ENCODE measurements at regions of chr3 and their contacts with region 1.

Region 1: DNA sequence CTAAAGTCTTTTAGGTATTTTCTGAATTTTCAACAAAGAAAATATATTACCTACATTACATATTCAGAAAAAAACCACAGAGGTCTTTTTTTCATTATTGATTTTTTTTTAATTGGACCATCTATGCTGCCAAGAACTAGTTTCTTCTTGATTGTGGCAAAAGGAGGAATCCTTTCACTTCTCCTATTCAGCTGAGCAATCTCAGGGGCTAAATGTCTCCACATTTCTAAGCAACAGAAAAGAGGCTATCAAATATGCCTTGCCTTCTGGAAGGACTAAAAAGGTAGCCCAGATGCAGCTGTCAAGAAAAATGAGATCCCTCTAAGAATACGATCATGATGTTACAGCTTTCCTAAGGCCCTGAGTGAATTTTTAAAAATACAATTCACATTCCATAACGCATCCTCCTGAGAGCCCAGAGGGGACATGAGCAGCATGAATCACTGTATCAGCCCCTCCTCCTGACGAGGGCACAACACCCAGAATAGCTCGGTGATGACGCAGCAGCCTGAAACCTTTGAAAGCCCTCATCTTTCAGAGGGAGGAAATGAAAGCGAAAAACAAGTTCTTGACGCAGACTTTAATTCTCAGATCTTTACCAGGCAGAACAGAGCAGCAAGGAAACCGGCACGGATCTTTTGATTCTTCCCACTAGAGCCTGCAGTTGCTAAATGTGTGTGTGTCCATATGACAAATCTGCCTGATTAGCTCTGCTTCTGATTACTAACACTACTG is 24.6 kb downstream of the RUBCN start:
- DNase-seq: peak; percentile 93 to 100
- H3K4me3 ChIP-seq: peak overlapping the region; percentile 41; the same call in 1 of the 2 replicates
- H3K27ac ChIP-seq: peak overlapping the region; percentile 98
- H3K4me1 ChIP-seq: peaks cover 38% of the 10 kb centered on the region
- H3K27me3 ChIP-seq: no peaks in the 10 kb centered on the region
- CTCF ChIP-seq: no peak

Region 2: DNA sequence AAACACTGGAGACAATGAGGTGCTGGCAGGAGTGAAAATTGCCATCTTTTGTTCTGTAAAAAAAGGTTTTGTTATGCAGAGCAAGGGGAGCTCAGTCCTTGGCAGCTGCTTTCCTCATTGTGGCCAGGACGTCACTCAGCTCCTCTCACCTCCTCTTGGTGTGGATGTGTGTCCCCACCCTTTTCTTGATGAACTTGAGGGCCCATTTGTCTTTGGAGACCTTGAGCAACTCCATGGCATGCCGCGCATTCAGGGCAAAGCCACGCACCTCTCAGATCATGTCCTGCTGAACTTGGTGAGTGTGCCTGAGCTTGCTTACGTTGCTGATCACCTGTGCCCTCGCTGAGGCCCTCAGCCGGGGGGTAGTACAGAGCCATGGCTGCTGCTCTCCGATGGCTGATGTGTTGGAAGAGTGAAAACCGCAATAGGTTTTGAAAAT is 131.9 kb before region 1 on chr3:
- CTCF ChIA-PET with region 1: no interaction called
- POLR2A ChIA-PET with region 1: no interaction called
- intact Hi-C with region 1: no loop called
- DNase-seq: no peak
- H3K4me3 ChIP-seq: no peak overlapping the region
- H3K27ac ChIP-seq: no peak overlapping the region
- H3K4me1 ChIP-seq: no peaks in the 10 kb centered on the region
- H3K27me3 ChIP-seq: no peaks in the 10 kb centered on the region
- CTCF ChIP-seq: no peak

Region 3: GRCh38 chr3:197736491-197737318 is 24.6 kb after region 1 on chr3 and contains the start of gene RUBCN:
- CTCF ChIA-PET with region 1: interaction called, 8 read pairs
- POLR2A ChIA-PET with region 1: interaction called, 9 read pairs
- intact Hi-C with region 1: loop called (anchors 1 kb)
- DNase-seq: peak; percentile 95 to 99
- H3K4me3 ChIP-seq: peak within 1 kb of the TSS; percentile 73
- H3K27ac ChIP-seq: peak within 1 kb of the TSS; percentile 79
- H3K4me1 ChIP-seq: peaks cover 22% of the 10 kb centered on the region
- H3K27me3 ChIP-seq: no peaks in the 10 kb centered on the region
- CTCF ChIP-seq: no peak
- total RNA-seq, gene RUBCN: 34.2 and 41.1 TPM in 2 replicates

Region 4: DNA sequence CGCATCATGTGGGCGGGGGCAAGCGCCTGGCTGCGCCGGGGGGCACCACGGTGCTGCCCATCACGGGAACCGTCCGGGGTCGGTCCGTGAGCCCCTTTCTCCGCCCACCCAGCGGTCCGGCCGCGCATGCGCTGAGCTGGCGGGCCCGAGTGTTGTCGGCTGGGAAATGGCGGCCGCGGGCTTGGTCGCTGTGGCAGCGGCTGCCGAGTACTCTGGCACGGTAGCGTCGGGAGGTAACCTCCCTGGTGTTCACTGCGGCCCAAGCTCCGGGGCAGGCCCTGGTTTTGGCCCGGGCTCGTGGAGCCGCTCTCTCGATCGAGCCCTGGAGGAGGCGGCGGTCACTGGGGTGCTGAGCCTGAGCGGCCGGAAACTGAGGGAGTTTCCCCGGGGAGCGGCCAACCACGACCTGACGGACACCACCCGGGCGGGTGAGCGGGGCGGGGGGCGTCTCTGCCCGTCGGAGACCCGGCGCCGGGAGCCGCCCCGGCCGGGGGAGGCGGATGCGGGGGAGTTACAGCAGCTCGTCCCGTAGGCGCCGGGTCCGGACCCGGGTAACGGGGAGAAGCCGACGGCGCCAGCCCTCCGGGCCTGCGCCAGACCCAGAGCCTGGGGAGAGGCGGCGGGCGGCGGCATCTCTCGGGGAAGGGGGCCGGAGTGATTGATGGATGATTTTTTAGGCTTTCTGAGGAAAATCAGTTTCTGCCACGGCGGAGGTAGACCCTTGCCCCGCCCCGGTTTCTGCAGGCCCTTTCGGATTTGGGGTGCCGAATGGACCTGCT is 79.2 kb after region 1 on chr3 and contains the start of gene LRCH3:
- CTCF ChIA-PET with region 1: no interaction called
- POLR2A ChIA-PET with region 1: no interaction called
- intact Hi-C with region 1: loop called (anchors 1 kb)
- DNase-seq: peak; percentile 49 to 84
- H3K4me3 ChIP-seq: peak within 1 kb of the TSS; percentile 89
- H3K27ac ChIP-seq: peak within 1 kb of the TSS; percentile 82
- H3K4me1 ChIP-seq: peaks cover 64% of the 10 kb centered on the region
- H3K27me3 ChIP-seq: no peaks in the 10 kb centered on the region
- CTCF ChIP-seq: no peak
- total RNA-seq, gene LRCH3: 51.9 and 71.5 TPM in 2 replicates

Measured in PC-9 (cell line).